Activated naive CD4-positive, alpha-beta T cell treated with anti-CD3 and anti-CD28 coated beads for 36 hours (primary cell): ENCODE measurements at regions of chr12 and their contacts with region 1.

Region 1: GRCh38 chr12:43758728-43759563 is at the starts of genes IRAK4 and PUS7L:
- DNase-seq: peak; percentile 96
- H3K4me3 Mint-ChIP-seq: peak within 1 kb of the TSS; percentile 97
- H3K27ac Mint-ChIP-seq: peak within 1 kb of the TSS; percentile 96
- H3K4me1 Mint-ChIP-seq: peaks cover 58% of the 10 kb centered on the region
- H3K27me3 Mint-ChIP-seq: no peaks in the 10 kb centered on the region
- total RNA-seq, gene IRAK4: 24.2 to 24.5 TPM
- total RNA-seq, gene PUS7L: 8.1 to 10.5 TPM

Region 2: DNA sequence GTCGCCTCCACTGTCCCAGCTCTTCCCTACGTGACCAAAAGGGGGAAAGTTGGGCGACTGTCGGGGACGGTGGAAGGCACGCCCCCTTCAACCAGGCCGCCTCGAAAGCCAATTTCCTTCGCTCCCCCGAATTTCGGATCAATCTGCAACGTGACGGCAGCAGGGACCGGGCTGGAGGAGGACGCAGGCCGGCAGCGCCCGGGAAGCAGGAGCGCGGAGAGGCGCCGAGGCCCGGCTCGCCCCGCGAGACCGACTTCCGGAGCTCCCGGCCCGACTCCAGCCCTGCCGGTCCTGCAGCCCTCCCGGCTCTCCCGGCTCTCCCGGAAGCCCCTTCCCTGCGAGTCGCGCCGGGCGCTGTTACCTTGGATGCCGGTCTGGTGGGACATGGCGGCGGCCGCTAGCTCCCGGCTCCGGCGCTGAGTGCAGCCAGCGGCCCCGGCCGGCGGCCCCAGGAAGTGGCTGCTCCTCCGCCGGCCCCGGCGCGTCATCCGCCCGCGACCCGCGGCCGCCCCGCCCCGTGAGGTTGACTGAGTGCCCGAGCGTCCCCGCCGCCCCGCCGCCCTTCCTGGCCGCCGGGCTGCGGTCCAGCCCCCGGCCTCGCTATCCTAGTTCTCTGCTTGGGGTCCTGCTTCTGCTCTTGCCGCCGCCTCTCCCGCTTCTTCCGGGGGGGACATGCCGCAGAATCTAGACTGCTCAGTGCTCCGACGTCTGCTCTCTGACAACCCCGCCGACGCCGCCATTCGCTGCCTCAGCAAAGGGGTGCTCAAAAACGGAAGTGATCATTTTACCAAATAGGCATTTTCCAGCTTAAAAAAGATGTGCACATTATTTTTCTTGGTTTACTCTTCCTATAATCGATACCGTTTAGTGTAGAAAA is 47.2 kb after region 1 on chr12 and contains the start of gene TWF1:
- CTCF ChIA-PET with region 1: interaction called, 6 read pairs
- intact Hi-C with region 1: loop called (anchors 1 kb)
- DNase-seq: peak; percentile 88
- H3K4me3 Mint-ChIP-seq: peak within 1 kb of the TSS; percentile 98
- H3K27ac Mint-ChIP-seq: peak within 1 kb of the TSS; percentile 100
- H3K4me1 Mint-ChIP-seq: peaks cover 39% of the 10 kb centered on the region
- H3K27me3 Mint-ChIP-seq: no peaks in the 10 kb centered on the region
- total RNA-seq, gene TWF1: 12.9 to 15.3 TPM

Region 3: DNA sequence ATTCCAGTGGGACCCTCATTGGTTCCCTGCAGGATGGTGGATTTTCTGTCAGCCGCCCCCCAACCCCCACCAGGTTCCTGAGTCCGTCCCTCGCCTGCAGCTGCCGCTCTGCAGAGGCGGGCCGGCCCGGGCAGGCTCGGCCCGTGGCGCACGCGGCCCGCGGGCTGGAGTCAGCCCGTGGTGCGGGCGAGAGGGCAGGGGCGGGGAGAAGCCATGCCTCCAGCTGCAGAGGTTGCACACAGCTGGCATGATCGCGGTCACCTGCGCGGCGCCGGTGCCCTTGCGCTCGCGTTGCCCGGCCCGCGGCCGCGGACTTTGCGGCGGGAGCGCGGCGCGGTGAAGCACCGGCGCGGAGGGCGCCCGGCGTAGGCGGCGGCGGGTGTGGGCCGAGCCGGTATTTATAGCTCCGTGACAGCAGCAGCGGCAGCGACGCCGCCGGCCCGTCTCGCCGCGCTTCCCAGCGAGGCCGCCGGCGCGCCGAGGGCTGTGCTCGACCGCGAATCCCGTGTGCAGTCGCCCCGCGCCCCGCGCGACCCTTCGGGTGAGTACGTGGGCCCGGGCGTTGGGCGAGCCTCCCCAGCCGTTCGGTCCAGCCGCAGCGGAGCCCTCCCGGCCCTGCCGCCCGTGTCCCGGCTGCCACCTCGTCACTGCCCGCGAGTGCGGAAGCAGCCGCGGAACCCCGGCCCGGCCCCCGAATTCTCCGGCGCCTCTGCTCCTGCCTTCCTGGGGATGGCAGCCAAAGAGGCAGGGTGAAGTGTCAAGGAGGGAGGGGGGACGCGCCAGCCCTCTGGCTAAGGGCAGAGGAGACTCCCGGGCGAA is 76.9 kb after region 1 on chr12 and contains the start of gene TMEM117:
- CTCF ChIA-PET with region 1: interaction called, 4 read pairs
- intact Hi-C with region 1: loop called (anchors 1 kb)
- DNase-seq: peak; percentile 62
- H3K4me3 Mint-ChIP-seq: peak within 1 kb of the TSS; percentile 72
- H3K27ac Mint-ChIP-seq: peak within 1 kb of the TSS; percentile 66
- H3K4me1 Mint-ChIP-seq: peaks cover 42% of the 10 kb centered on the region
- H3K27me3 Mint-ChIP-seq: no peaks in the 10 kb centered on the region
- total RNA-seq, gene TMEM117: 1.4 to 2.1 TPM

Region 4: DNA sequence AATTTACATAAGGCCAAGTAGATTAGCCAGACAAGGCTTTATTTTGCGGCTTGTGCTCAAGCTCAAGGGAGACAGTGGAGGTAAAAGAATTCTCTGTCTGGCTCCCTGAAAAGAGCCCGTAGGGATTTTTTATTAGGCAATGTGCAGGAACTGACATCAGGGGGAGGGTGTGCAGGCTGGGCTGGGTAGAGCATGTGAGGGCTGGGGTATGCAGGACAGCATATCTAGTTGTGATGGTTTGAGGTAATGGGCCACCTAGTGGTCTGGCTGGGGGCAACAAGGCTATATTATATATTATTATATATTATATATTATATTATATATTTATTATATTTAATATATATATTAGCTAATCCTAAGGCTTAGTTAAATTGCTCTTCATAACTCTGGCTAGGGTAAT is 179.0 kb after region 1 on chr12:
- CTCF ChIA-PET with region 1: no interaction called
- intact Hi-C with region 1: loop called (anchors 1 kb)
- DNase-seq: peak; percentile 5
- H3K4me3 Mint-ChIP-seq: no peak overlapping the region
- H3K27ac Mint-ChIP-seq: no peak overlapping the region
- H3K4me1 Mint-ChIP-seq: no peaks in the 10 kb centered on the region
- H3K27me3 Mint-ChIP-seq: no peaks in the 10 kb centered on the region